Activated naive CD4-positive, alpha-beta T cell treated with anti-CD3 and anti-CD28 coated beads, Interleukin-2, amount 10 ng/mL, durations not matched to agents 7 days and 5 days (primary cell): ENCODE measurements at regions of chr7 and their contacts with region 1.

Region 1: DNA sequence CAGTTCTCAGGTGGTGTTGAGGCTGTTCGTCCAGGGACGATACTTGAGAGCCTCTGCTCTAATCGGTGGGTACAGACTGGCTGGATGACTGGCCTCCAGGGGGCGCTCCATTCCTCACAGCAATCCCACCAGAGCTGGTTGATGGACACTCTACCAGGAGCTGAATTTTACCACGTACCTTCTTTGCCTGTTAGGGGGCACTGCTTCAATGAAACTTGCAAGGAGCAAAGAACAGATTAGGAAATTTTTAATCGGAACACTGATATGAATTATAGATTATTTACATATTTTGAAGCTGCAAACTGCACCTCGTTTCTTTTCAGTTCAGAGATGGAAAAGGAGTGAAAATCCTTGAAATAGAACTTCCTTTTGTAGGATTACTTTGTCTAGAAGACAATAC is 44.9 kb downstream of the KBTBD2 start:
- DNase-seq: peak; percentile 92
- H3K4me3 Mint-ChIP-seq: no peak overlapping the region
- H3K27ac Mint-ChIP-seq: no peak overlapping the region
- H3K4me1 Mint-ChIP-seq: peaks cover 9% of the 10 kb centered on the region
- H3K27me3 Mint-ChIP-seq: peaks cover 33% of the 10 kb centered on the region

Region 2: DNA sequence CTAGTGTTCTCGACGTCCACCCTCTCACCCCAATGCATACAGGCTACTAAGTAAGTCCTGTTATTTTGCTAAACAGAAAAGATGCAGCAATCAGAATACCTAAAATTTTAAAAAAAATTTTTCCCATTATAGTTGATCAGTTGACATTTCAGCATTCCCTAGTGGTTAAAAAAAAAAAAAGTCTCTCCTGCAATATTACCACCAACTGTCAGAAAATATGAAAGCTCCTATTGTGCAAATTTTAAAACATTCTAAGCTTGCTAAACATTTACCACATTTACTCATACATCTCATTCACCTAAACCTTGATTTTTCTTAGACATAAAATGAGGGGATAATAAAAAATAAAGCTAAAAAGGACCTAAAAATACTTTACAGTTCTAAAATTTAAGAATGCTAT is 185.8 kb before region 1 on chr7:
- CTCF ChIA-PET with region 1: no interaction called
- DNase-seq: no peak
- H3K4me3 Mint-ChIP-seq: no peak overlapping the region
- H3K27ac Mint-ChIP-seq: no peak overlapping the region
- H3K4me1 Mint-ChIP-seq: no peaks in the 10 kb centered on the region
- H3K27me3 Mint-ChIP-seq: peaks cover 14% of the 10 kb centered on the region

Region 3: DNA sequence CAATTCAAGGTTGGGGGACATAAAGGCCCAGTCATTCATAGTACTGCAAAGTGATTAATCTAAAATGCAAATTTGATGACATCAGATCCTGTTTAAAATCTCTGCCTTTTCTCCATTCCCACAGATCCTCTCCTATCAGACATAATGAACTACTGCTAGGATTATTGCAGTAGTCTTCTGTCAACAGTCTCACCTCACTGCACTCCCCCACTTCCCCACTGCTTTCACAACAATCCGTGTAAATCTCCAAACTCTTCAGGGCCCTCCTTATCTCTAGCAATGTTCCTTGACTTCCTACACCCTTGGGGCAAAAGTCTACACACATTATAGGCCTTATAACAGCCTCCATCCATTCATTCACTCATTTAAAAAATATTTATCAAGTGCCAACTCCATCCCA is 67.5 kb before region 1 on chr7:
- CTCF ChIA-PET with region 1: no interaction called
- DNase-seq: no peak
- H3K4me3 Mint-ChIP-seq: no peak overlapping the region
- H3K27ac Mint-ChIP-seq: no peak overlapping the region
- H3K4me1 Mint-ChIP-seq: no peaks in the 10 kb centered on the region
- H3K27me3 Mint-ChIP-seq: peaks cover 3% of the 10 kb centered on the region

Region 4: DNA sequence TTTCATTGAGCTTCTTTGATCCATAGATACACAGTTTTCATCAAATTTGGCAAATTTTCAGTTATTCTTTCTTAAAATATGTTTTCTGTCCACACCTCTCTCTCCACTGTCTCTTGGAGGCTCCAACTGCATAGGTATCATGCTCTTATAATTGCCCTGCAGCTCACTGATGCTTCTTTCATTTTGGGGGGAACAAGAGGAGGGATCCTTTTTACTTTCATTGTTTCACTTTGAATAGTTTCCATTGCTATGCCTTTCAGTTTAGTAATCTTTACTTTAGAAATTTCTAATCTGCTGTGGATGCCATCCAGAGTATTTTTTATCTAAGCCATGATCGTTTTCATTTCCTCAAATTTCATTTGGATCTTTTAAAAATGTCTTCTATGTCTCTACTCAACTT is 11.9 kb after region 1 on chr7:
- CTCF ChIA-PET with region 1: interaction called, 11 read pairs
- DNase-seq: no peak
- H3K4me3 Mint-ChIP-seq: no peak overlapping the region
- H3K27ac Mint-ChIP-seq: no peak overlapping the region
- H3K4me1 Mint-ChIP-seq: no peaks in the 10 kb centered on the region
- H3K27me3 Mint-ChIP-seq: peaks cover 20% of the 10 kb centered on the region

Region 5: GRCh38 chr7:32871624-32872371 is 25.1 kb after region 1 on chr7:
- CTCF ChIA-PET with region 1: interaction called, 13 read pairs
- DNase-seq: no peak
- H3K4me3 Mint-ChIP-seq: no peak overlapping the region
- H3K27ac Mint-ChIP-seq: no peak overlapping the region
- H3K4me1 Mint-ChIP-seq: peaks cover 11% of the 10 kb centered on the region
- H3K27me3 Mint-ChIP-seq: no peaks in the 10 kb centered on the region

Region 6: DNA sequence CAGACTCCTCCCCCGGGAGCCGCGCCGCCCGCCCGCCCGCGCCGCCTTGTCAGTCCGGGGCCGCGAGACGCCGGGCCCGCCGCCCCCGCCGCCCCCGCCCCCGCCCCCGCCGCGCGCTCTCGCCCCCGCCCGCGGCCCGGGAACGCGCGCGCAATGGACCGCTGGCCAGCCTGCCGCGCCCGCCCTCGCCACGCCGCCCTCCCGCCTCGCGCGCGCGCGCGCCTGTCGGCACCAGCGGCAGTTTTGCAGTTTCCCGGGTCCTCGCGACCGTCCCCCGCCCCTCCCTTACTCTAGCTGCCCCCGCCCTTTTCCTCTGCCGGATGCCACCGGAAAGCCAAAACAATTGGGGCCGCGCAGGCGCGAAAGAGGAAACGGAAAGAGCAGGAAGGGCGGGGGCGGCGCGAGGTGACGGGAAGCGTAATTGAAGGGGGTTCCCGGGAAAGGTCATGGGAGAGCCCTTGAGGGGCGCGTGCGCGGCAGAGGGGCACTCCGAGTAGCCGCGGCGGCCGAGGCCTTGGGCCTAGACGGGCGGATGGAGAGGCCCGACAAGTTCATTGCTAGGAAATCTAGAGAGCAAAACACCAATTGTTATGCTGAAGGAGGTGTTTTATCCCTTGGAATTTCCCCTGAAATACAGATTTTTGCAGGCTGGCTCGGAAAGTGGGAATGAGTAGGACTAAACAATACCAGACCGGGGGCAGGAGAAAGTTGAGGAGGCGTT is 45.3 kb after region 1 on chr7:
- CTCF ChIA-PET with region 1: interaction called, 14 read pairs
- DNase-seq: peak; percentile 98
- H3K4me3 Mint-ChIP-seq: peak overlapping the region; percentile 83
- H3K27ac Mint-ChIP-seq: peak overlapping the region; percentile 96
- H3K4me1 Mint-ChIP-seq: peaks cover 58% of the 10 kb centered on the region
- H3K27me3 Mint-ChIP-seq: peaks cover 6% of the 10 kb centered on the region

Region 7: DNA sequence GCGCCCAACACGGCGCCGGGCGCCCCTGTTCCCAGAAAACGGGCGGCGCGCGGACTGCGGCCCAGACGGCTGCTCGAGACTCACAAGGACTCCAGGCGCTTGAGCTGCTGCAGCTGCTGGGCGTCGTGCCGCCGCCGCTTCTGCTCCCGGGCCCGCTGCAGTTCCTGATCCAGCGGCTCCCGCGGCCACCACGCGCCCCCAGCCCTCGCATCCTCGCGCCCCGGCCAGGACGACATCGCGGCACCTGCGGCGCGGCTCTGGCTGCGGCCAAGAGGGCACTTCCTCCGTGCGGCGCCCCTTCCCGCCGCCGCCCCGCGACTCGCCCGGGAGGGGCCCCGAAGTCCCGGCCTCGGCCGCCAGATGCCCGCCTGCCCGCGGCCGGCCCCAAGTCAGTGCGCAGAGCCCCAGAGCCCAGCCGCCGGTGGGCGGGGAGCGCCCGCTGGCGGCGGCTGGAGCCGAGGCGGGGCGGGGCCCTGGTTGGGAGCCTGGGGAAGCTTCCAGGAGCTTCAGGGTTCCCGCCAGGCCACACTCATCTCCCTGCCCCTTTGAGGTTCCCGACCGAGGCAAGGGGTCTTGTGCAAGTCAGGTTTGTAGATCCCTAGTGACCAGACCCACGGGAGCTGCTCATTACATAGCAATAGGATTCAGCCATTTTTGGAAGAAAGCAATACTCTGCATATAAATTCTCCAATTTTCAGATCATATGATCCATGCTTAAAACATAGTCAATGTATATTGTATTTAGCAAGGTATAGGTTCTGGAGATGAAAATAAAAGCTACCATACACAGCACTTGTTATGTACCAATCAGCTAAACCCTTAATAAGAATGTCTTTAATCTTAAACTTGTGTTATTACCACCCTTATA is 96.3 kb after region 1 on chr7:
- CTCF ChIA-PET with region 1: interaction called, 67 read pairs
- DNase-seq: peak; percentile 75
- H3K4me3 Mint-ChIP-seq: peak overlapping the region; percentile 90
- H3K27ac Mint-ChIP-seq: peak overlapping the region; percentile 64
- H3K4me1 Mint-ChIP-seq: peaks cover 14% of the 10 kb centered on the region
- H3K27me3 Mint-ChIP-seq: peaks cover 18% of the 10 kb centered on the region

Region 8: GRCh38 chr7:33050535-33051318 is 204.0 kb after region 1 on chr7:
- CTCF ChIA-PET with region 1: interaction called, 12 read pairs
- DNase-seq: peak; percentile 36
- H3K4me3 Mint-ChIP-seq: no peak overlapping the region
- H3K27ac Mint-ChIP-seq: no peak overlapping the region
- H3K4me1 Mint-ChIP-seq: peaks cover 54% of the 10 kb centered on the region
- H3K27me3 Mint-ChIP-seq: no peaks in the 10 kb centered on the region

Region 9: DNA sequence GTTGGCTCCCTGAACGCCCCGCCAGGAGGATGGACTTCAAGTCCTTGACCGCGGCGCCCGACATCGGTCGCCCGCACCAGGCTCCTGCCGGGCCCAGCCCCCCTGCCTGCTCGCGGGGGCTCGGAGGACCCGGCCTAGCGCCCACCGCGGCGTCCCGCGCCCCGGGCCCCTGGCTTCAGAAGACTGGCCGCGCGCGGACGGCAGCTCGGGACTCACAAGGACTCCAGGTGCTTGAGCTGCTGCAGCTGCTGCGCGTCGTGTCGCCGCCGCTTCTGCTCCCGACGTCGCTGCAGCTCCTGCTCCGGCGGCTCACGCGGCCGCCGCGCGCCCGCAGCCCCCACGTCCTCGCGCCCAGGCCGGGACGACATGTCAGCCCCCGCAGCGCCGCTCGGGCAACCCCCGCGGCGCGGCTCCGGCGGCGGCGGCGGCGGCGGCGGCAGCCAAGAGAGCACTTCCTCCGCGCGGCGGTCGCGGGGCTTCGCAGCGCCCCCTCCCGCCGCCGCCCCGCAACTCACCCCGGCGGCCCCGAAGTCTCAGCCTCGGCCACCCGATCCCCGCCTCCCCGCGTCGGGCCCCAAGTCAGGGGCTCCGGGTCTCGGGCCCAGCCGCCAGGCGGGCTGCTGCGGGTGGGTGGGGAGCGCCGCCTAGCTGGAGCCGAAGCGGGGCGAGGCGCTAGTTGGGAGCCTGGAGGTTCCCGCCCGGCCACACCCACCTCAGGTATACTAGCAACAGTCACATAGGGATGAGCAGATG is 262.5 kb after region 1 on chr7 and contains the start of gene RP9:
- CTCF ChIA-PET with region 1: interaction called, 46 read pairs
- DNase-seq: peak; percentile 76
- H3K4me3 Mint-ChIP-seq: peak within 1 kb of the TSS; percentile 91
- H3K27ac Mint-ChIP-seq: peak within 1 kb of the TSS; percentile 70
- H3K4me1 Mint-ChIP-seq: peaks cover 36% of the 10 kb centered on the region
- H3K27me3 Mint-ChIP-seq: peaks cover 39% of the 10 kb centered on the region